A549 (cell line): ENCODE measurements at regions of chr6 and their contacts with region 1.

Region 1: DNA sequence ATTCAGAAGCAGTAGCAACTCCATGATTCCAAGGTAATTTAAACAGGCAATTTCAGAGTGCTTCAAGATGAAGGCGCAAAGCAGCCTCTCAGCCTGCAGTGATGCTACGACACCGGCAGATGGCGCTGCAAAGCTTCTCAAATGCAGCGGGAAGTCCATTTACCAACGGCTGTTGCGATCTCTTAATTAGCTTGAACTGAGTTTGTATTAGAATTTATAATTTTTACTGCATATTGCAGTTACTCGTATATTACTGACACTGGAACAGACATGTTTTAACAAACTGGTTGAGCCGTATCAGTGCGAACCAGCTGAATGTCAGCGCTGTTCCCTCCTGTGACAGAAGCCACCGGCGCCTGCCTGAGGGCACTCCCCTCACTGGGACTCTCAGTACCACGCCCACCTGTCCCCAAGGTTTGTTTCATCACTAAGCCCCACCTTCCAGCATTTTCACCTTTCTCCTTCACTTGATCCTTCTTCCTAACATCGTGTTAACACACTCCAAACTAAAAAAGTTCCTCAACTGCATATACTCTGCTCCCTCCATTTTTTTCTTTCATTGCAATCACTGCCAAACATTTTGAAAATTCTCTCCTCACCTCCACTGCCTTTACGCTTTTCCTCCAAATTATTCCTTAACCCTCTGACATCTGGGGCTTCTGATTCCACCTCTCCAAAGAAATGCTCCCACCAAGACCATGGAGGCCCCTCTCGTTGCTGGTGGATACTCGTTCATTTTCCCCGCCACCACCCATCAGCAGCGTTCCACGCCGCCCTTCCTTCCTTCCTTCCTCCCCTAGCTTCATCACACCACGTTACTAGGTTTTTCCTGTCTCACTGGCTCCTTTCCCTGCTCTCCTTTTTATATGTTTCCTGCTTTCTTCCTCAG is 14.5 kb downstream of the GNL1 start:
- DNase-seq: peak; percentile 52 to 86
- ATAC-seq: peak; percentile 68 to 74; a peak in 5 of 6 replicates
- H3K4me3 ChIP-seq: peak overlapping the region; percentile 32; the same call in 2 of the 3 replicates
- H3K27ac ChIP-seq: no peak overlapping the region
- H3K4me1 ChIP-seq: no peaks in the 10 kb centered on the region
- CTCF ChIP-seq: peak; percentile 83
- EP300 ChIP-seq: no peak
- POLR2A ChIP-seq: no peak
- RAD21 ChIP-seq: peak; percentile 60 to 64

Region 2: GRCh38 chr6:30453508-30454116 is 88.1 kb before region 1 on chr6:
- CTCF ChIA-PET with region 1: interaction called, 16 read pairs
- POLR2A ChIA-PET with region 1: no interaction called
- DNase-seq: peak; percentile 81 to 89
- ATAC-seq: peak; percentile 82 to 97
- H3K4me3 ChIP-seq: no peak overlapping the region
- H3K27ac ChIP-seq: no peak overlapping the region
- H3K4me1 ChIP-seq: no peaks in the 10 kb centered on the region
- CTCF ChIP-seq: peak; percentile 61
- EP300 ChIP-seq: no peak
- POLR2A ChIP-seq: no peak
- RAD21 ChIP-seq: peak; percentile 52 to 60

Region 3: GRCh38 chr6:30489081-30490025 is 52.4 kb before region 1 on chr6 and contains the start of gene HLA-E:
- CTCF ChIA-PET with region 1: interaction called, 320 read pairs
- POLR2A ChIA-PET with region 1: no interaction called
- DNase-seq: peak; percentile 87 to 98
- ATAC-seq: peak; percentile 96
- H3K4me3 ChIP-seq: peak within 1 kb of the TSS; percentile 90
- H3K27ac ChIP-seq: peak within 1 kb of the TSS; percentile 76 to 92
- H3K4me1 ChIP-seq: peaks cover 5% of the 10 kb centered on the region; the same call in 1 of the 3 replicates
- CTCF ChIP-seq: no peak
- EP300 ChIP-seq: no peak
- POLR2A ChIP-seq: peak; percentile 84
- RAD21 ChIP-seq: no peak
- polyA plus RNA-seq, gene HLA-E: 38.3 and 40.0 TPM in 2 replicates

Region 4: GRCh38 chr6:30556066-30556905 is 14.5 kb after region 1 on chr6 and contains the start of gene GNL1:
- CTCF ChIA-PET with region 1: interaction called, 103 read pairs
- POLR2A ChIA-PET with region 1: no interaction called
- DNase-seq: peak; percentile 80 to 95
- ATAC-seq: peak; percentile 82 to 91
- H3K4me3 ChIP-seq: peak within 1 kb of the TSS; percentile 88
- H3K27ac ChIP-seq: peak within 1 kb of the TSS; percentile 91 to 94
- H3K4me1 ChIP-seq: peaks cover 13% of the 10 kb centered on the region; the same call in 2 of the 3 replicates
- CTCF ChIP-seq: no peak
- EP300 ChIP-seq: no peak
- POLR2A ChIP-seq: no peak
- RAD21 ChIP-seq: no peak
- polyA plus RNA-seq, gene GNL1: 18.5 and 25.6 TPM in 2 replicates

Region 5: DNA sequence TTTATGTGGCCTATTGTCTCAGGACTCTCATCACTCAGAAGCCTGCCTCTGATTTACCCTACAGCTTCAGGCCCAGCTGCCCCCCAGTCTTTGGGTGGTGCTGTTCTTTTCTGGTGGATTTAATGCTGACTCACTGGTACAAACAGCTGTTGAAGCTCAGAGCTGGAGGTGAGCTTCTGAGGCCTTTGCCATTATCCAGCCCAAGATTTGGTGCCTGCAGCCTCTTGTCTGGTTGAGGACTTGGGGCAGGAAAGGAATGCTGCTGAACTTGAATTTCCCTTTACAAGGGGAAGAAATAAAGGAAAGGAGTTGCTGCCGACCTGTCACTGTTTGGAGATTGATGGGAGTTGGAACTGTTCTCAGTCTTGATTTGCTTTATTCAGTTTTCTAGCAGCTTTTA is 49.2 kb after region 1 on chr6:
- CTCF ChIA-PET with region 1: interaction called, 11 read pairs
- POLR2A ChIA-PET with region 1: no interaction called
- DNase-seq: no peak
- ATAC-seq: peak; percentile 8 to 40; a peak in 4 of 6 replicates
- H3K4me3 ChIP-seq: no peak overlapping the region
- H3K27ac ChIP-seq: peak overlapping the region; percentile 27 to 67; a peak in 3 of 6 replicates
- H3K4me1 ChIP-seq: peaks cover 9% of the 10 kb centered on the region; the same call in 2 of the 3 replicates
- CTCF ChIP-seq: no peak
- EP300 ChIP-seq: no peak
- POLR2A ChIP-seq: no peak
- RAD21 ChIP-seq: no peak

Region 6: DNA sequence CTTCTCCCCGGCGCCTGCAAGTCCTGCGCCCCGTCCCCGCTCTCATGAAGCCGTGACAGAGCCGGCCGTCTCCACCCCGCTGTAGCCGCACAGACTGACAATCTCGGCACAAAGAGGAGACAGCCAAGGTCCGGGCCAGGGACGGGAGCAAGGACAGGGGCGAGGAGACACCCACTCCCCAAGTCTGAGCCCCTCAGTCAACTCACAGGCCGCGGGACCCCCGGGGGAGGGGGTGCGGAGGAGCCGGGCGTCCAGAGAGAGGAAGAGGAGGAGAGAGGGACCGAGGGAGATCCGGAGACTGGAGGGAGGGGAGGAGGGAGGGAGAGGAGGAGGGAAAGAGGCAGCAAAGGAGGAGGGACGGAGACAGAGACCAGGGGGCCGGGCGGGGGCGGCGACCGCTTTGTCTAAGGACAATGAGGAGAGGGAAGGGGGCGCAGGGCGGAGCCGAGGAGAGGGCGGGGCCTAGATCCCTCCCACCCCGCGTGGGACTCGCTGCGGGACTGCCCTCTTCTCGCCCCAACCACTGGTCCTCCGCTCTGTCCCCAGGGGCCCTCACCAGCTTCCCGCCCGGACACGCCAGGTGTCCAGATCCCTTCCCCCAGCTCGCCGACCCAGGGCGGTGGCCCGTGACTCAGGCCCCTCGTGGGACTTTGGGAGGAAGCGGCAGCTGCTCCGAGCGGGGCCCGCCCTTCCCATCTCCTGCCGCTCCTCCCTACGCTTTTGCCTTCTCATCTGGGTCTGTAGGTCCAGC is 145.3 kb after region 1 on chr6:
- CTCF ChIA-PET with region 1: no interaction called
- POLR2A ChIA-PET with region 1: no interaction called
- DNase-seq: peak; percentile 54 to 85
- ATAC-seq: peak; percentile 51 to 74
- H3K4me3 ChIP-seq: peak overlapping the region; percentile 84
- H3K27ac ChIP-seq: peak overlapping the region; percentile 83 to 99
- H3K4me1 ChIP-seq: peaks cover 63% of the 10 kb centered on the region
- CTCF ChIP-seq: no peak
- EP300 ChIP-seq: no peak
- POLR2A ChIP-seq: no peak; the same call in 1 of the 2 replicates
- RAD21 ChIP-seq: no peak